ENCODE measurements at regions of chr19 and their contacts with region 1.

Region 1: GRCh38 chr19:15532779-15533521 is 24.6 kb downstream of the CYP4F22 start:
- DNase-seq: no peak
- H3K4me3 ChIP-seq: no peak overlapping the region
- H3K27ac ChIP-seq: no peak overlapping the region
- H3K4me1 ChIP-seq: no peaks in the 10 kb centered on the region
- H3K27me3 ChIP-seq: no peaks in the 10 kb centered on the region
- CTCF ChIP-seq: no peak

Region 2: GRCh38 chr19:15177269-15178116 is 355.5 kb before region 1 on chr19:
- CTCF ChIA-PET with region 1: no interaction called
- POLR2A ChIA-PET with region 1: interaction called, 15 read pairs
- intact Hi-C with region 1: no loop called
- DNase-seq: peak; percentile 89
- H3K4me3 ChIP-seq: peak overlapping the region; percentile 41
- H3K27ac ChIP-seq: no peak overlapping the region
- H3K4me1 ChIP-seq: peaks cover 17% of the 10 kb centered on the region
- H3K27me3 ChIP-seq: no peaks in the 10 kb centered on the region
- CTCF ChIP-seq: peak; percentile 85

Region 3: DNA sequence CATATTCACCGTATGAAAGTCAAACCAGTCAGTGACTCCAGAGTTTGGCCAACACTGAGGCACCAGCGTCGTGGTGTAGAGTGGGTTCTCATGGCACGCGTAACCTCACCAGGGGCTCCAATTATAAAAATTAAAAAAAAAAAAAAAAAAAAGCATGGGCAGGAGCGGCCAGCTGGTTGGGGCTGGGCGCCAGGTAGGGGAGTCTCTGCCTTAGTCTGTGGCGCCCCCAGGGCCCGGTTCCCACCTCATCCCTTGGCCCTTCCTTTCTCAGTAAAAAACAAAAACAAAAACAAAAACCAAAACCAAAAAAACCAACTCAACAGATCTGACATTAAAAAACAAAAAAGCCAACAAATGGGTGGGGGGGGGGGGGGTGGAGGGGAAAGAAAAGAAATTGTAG is 296.1 kb before region 1 on chr19:
- CTCF ChIA-PET with region 1: no interaction called
- POLR2A ChIA-PET with region 1: interaction called, 22 read pairs
- intact Hi-C with region 1: no loop called
- DNase-seq: no peak
- H3K4me3 ChIP-seq: no peak overlapping the region
- H3K27ac ChIP-seq: no peak overlapping the region
- H3K4me1 ChIP-seq: no peaks in the 10 kb centered on the region
- H3K27me3 ChIP-seq: no peaks in the 10 kb centered on the region
- CTCF ChIP-seq: no peak

Measured in A673 (cell line).